ENCODE measurements at regions of chr11 and their contacts with region 1.

Region 1: DNA sequence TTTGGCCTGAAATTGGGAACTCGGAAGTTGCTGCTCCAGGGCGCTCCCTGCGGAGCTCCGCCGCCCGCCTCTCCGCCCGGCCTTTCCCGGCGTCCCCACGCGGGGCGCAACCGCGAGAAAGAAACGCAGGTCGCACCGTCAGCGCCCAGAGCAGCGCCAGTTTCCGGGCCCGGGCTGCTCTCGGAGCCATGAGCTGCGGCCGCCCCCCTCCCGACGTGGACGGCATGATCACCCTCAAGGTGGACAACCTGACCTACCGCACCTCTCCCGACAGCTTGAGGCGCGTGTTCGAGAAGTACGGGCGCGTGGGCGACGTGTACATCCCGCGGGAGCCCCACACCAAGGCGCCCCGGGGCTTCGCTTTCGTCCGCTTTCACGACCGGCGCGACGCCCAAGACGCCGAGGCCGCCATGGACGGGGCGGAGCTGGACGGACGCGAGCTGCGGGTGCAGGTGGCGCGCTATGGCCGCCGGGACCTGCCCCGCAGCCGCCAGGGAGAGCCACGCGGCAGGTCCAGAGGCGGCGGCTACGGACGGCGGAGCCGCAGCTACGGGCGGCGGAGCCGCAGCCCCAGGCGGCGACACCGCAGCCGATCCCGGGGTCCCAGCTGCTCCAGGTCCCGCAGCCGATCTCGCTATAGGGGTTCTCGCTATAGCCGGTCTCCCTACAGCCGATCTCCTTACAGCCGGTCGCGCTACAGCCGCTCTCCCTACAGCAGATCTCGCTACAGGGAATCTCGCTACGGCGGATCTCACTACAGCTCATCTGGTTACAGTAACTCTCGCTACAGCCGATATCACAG is 521 bp downstream of the SRSF8 start:
- DNase-seq: no peak
- H3K4me3 ChIP-seq: peak overlapping the region; percentile 62
- H3K27me3 ChIP-seq: no peaks in the 10 kb centered on the region
- CTCF ChIP-seq: peak; percentile 74

Region 2: GRCh38 chr11:95084509-95084908 is 17.3 kb after region 1 on chr11:
- CTCF ChIA-PET with region 1: interaction called, 59 read pairs
- POLR2A ChIA-PET with region 1: interaction called, 3 read pairs
- DNase-seq: no peak
- H3K4me3 ChIP-seq: no peak overlapping the region
- H3K27me3 ChIP-seq: no peaks in the 10 kb centered on the region; the same call in 1 of the 2 replicates
- CTCF ChIP-seq: no peak

Region 3: DNA sequence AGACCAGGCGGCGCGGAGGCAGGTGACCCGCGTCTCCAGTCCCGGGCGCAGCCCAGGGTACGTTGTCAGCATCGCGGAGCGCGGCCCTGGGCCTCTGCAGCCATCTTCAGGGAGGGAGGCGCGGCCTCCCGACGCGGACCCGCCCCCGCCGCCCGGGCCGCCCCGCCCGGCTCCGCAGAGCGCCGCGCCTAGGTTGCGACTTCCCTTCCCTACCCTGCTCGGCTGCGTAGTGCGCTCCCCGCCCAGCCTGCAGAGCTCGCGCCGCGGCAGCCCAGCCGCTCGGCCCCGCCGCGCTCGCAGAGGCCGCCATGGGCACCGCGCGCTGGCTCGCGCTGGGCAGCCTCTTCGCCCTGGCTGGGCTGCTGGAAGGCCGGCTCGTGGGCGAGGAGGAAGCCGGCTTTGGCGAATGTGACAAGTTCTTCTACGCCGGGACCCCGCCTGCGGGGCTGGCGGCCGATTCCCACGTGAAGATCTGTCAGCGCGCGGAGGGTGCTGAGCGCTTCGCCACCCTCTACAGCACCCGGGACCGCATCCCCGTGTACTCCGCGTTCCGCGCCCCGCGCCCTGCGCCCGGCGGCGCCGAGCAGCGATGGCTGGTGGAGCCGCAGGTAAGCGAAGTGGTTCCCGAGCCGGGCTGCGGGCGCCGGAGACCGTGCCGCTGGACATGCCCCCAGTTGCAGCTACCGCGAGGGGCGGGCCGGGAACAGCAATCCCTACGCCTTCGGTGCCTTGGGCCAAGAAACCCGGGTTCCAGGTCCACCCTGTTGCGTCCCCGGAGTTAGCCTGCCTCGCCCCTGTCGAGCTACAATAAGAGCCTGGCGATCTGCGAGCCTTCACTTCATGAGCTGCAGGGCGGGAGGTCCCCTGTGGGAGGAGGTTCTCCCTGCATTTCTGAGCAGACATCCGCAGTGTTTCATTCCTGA is 22.6 kb after region 1 on chr11 and contains the start of gene ENDOD1:
- CTCF ChIA-PET with region 1: interaction called, 59 read pairs
- POLR2A ChIA-PET with region 1: no interaction called
- DNase-seq: no peak
- H3K4me3 ChIP-seq: peak within 1 kb of the TSS; percentile 69
- H3K27me3 ChIP-seq: no peaks in the 10 kb centered on the region; the same call in 1 of the 2 replicates
- CTCF ChIP-seq: peak; percentile 24; the same call in 1 of the 2 replicates
- polyA plus RNA-seq, gene ENDOD1: 11.0 and 13.6 TPM in 2 replicates

Region 4: GRCh38 chr11:95140397-95141033 is 73.3 kb after region 1 on chr11:
- CTCF ChIA-PET with region 1: interaction called, 128 read pairs
- POLR2A ChIA-PET with region 1: no interaction called
- DNase-seq: no peak
- H3K4me3 ChIP-seq: no peak overlapping the region
- H3K27me3 ChIP-seq: no peaks in the 10 kb centered on the region
- CTCF ChIP-seq: no peak

Region 5: DNA sequence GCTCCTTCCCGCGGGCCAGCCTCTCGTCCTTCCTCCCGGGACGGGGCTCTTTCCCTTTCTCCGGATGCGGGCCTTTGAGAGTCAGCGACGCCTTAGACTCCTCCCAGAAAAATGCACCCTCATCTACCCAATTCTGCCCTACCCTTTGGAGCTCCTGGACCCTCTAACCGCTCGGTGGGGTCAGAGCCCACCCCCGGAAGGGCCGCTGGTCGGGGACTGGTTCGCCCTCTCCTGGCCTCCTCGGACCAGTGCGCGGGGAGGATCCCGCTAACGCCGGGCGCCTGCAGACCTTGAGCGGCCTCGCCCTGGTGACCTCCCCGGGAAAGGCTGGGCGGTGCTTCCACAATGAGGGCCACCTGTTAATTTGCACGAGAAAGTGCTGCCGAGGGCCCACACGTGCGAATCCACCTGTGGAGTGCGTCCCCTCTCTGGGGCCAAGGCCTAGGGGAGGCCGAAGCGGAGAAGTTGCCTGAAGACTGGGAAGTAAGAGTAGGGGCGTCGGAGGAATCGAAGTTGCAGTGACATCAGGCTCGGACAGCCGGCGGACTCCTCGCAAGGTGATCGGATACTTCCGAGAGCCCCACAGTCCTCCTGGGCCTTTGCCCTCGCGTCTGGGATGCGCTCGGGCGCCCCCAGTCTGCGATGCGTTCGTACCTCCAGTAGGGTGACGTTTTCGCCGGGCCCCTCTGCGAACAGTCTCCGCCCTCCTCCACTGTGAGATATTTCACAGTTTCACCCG is 83.9 kb after region 1 on chr11:
- CTCF ChIA-PET with region 1: interaction called, 128 read pairs
- POLR2A ChIA-PET with region 1: interaction called, 17 read pairs
- DNase-seq: no peak
- H3K4me3 ChIP-seq: peak overlapping the region; percentile 48
- H3K27me3 ChIP-seq: no peaks in the 10 kb centered on the region; the same call in 1 of the 2 replicates
- CTCF ChIP-seq: peak; percentile 81

Region 6: DNA sequence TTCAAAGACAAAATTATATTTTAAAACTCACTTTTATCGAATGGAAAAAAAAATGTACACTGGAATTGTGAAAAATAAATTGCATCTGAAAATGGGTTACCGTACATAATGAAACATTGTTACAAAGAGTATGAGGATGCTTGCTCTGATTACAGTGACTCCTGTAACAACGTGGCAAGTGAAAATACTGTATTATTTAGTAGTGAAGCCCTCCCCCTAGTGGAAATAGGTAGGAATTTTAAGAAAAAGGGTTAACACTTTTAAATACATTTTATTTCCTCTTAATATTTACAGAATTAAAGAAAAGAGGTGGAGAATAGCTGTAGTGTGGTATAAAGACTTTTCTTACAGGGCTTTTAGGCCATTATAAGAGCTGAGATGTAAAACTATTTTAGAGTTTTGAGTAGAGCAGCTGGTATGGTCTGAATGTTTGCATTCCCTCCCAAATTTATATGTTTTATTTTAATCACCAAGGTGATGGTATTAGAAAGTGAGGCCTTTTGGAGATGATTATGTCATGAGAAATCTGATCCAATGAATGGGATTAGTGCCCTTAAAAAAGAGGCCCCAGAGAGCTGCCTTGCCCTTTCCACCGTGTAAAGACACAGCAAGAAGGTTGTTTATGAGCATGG is 697.1 kb after region 1 on chr11:
- CTCF ChIA-PET with region 1: interaction called, 10 read pairs
- POLR2A ChIA-PET with region 1: no interaction called
- DNase-seq: no peak
- H3K4me3 ChIP-seq: no peak overlapping the region
- H3K27me3 ChIP-seq: peaks cover 6% of the 10 kb centered on the region
- CTCF ChIP-seq: peak; percentile 58